ENCODE measurements at regions of chr4 and their contacts with region 1.

Region 1: GRCh38 chr4:104475652-104476051 is 19.0 kb downstream of the CXXC4 start:
- DNase-seq: no peak
- ATAC-seq: no peak
- H3K4me3 ChIP-seq: no peak overlapping the region
- H3K27ac ChIP-seq: no peak overlapping the region
- H3K4me1 ChIP-seq: no peaks in the 10 kb centered on the region
- H3K27me3 ChIP-seq: no peaks in the 10 kb centered on the region
- CTCF ChIP-seq: no peak
- POLR2A ChIP-seq: no peak
- RAD21 ChIP-seq: no peak

Region 2: DNA sequence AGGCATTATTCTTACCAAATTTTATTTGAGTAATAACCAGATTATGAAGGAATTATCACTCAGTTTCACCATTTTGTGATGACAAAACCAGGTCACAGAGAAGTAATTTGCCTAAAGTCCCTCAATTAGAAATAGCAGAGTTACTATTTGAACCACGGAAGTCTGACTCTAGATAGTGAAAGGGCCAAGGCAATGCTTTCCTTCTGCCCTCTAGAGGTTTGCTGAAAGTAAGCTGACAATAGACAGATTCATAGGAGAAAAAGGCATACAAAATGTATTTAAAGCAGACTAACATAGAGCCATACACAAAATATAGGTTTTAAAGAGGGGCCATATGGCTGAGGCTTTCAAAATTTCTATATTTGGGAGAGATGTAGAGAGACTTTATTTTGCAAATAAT is 24.1 kb before region 1 on chr4:
- CTCF ChIA-PET with region 1: no interaction called
- POLR2A ChIA-PET with region 1: no interaction called
- dilution Hi-C with region 1: no loop called
- in situ Hi-C with region 1: no loop called
- intact Hi-C with region 1: no loop called
- DNase-seq: no peak
- ATAC-seq: no peak
- H3K4me3 ChIP-seq: no peak overlapping the region
- H3K27ac ChIP-seq: no peak overlapping the region
- H3K4me1 ChIP-seq: no peaks in the 10 kb centered on the region
- H3K27me3 ChIP-seq: no peaks in the 10 kb centered on the region
- CTCF ChIP-seq: no peak
- POLR2A ChIP-seq: no peak
- RAD21 ChIP-seq: no peak

Region 3: GRCh38 chr4:104494822-104495559 is 19.3 kb after region 1 on chr4 and contains the start of gene CXXC4:
- CTCF ChIA-PET with region 1: interaction called, 10 read pairs
- POLR2A ChIA-PET with region 1: no interaction called
- dilution Hi-C with region 1: no loop called
- in situ Hi-C with region 1: no loop called
- intact Hi-C with region 1: no loop called
- DNase-seq: peak; percentile 10
- ATAC-seq: peak; percentile 72
- H3K4me3 ChIP-seq: peak within 1 kb of the TSS; percentile 40
- H3K27ac ChIP-seq: no peak within 1 kb of the TSS
- H3K4me1 ChIP-seq: no peaks in the 10 kb centered on the region
- H3K27me3 ChIP-seq: peaks cover 12% of the 10 kb centered on the region
- CTCF ChIP-seq: no peak
- POLR2A ChIP-seq: no peak
- RAD21 ChIP-seq: no peak
- total RNA-seq, gene CXXC4: under 0.01 TPM in 1 of 2 replicates, not detected in the other

Region 4: GRCh38 chr4:104630272-104630671 is 154.6 kb after region 1 on chr4:
- CTCF ChIA-PET with region 1: no interaction called
- POLR2A ChIA-PET with region 1: no interaction called
- dilution Hi-C with region 1: no loop called
- in situ Hi-C with region 1: no loop called
- intact Hi-C with region 1: no loop called
- DNase-seq: no peak
- ATAC-seq: no peak
- H3K4me3 ChIP-seq: no peak overlapping the region
- H3K27ac ChIP-seq: no peak overlapping the region
- H3K4me1 ChIP-seq: no peaks in the 10 kb centered on the region
- H3K27me3 ChIP-seq: no peaks in the 10 kb centered on the region
- CTCF ChIP-seq: no peak
- POLR2A ChIP-seq: no peak
- RAD21 ChIP-seq: no peak